GM10248 (cell line): ENCODE measurements at regions of chr14 and their contacts with region 1.

Region 1: DNA sequence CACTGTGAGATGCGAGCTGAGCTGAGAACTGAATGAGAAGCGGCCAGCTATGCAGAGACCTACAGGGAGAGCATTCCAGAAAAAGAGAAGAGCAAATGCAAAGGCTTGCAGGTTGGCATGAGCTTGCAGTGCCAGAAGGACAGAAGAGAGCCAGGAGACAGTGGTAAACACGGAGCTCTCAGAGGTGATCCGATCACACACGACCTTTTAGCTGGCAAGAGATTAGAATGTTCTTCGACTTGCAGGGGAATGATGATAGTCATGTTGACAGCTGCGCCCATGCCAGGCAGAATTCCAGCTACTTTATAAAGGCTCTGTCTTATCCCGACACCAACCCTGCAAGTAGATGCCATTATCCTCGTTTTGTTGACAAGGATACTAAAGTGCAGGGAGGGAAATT is 256.8 kb downstream of the VRK1 start:
- DNase-seq: no peak
- CTCF ChIP-seq: no peak

Region 2: DNA sequence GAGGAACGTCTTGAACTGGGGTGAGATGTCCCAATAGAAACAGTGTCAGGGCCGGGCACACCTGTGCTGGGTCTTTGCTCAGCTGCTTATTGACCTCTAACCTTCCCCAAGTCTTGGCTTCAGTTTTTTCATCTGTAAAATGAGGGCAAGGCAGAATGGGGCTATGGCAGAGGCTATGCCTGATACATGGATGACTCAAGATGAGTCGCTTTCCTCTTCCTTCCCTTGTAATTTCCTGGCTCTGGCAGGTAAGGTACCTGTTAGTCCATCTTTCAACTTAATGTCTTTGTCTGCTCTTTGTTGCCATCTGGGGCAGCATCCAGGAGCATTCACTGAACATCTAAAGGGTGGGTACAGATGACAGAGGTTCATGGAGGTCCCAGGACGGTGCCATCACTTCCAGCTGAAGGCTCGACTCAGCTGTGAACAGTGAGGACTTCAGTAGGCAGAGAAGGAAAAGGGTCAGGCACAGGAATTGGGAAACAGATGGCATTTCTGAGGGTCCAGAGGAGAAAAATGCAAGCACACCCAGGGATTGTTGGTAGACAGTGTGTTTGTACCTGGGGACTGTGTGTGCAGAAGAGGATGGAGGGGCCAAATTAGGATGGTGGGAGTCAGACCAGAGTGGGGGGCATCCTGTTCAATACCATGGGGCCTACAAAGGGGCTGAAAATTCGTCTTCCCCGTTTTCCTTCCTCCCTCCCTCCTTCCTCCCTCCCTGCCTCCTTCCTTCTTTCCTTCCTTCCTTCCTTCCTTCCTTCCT is 11.5 kb after region 1 on chr14:
- CTCF ChIA-PET with region 1: interaction called, 10 read pairs
- POLR2A ChIA-PET with region 1: no interaction called
- DNase-seq: no peak
- CTCF ChIP-seq: no peak